Endothelial cell of umbilical vein (primary cell): ENCODE measurements at regions of chr1 and their contacts with region 1.

Region 1: DNA sequence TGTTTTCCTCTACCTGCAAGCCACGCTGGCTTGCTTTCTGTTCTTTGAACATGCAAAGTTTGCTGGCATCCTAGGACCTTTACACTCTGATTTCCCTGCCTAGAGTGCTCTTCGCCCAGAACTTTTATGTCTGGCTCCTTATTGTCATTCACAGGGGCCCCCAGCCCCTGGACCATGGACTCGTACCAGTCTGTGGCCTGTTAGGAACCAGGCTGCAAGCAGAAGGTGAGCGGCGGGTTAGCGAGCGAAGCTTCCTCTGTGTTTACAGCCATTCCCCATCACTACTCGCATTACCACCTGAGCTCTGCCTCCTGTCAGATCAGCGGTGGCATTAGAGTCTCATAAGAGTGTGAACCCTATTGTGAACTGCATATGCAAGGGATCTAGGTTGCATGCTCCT is 73.0 kb downstream of the ATG4C start:
- DNase-seq: no peak
- H3K4me3 ChIP-seq: no peak overlapping the region
- H3K27ac ChIP-seq: no peak overlapping the region
- H3K4me1 ChIP-seq: no peaks in the 10 kb centered on the region
- H3K27me3 ChIP-seq: no peaks in the 10 kb centered on the region
- CTCF ChIP-seq: no peak
- POLR2A ChIP-seq: no peak

Region 2: DNA sequence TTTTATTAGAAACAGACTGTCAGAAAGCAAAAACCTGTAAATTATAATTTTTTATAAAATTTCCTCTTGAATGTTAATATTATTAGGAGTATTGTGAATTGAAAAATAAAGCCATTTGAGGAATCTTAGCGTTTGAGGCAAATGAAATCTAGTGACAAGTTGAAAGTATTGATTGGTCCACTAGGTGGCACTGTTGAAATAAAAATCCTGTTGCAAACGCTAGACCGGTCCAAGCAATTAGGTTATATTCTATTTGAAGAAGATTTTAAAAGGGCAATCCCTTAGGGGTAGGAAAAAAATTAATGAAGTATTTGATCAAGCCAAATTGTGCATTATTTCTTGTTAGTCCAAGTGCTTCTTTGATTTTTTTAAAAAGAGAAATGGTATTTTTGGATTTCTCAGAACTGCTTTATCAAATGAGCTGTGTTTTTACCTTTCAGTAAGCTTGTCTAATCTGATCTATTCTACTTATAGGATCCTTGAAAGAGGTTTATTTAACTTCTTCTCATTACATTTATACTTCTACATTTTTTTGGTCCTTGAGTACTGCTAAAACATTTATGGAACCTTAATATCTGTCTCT is 15.3 kb before region 1 on chr1:
- CTCF ChIA-PET with region 1: interaction called, 53 read pairs
- POLR2A ChIA-PET with region 1: no interaction called
- dilution Hi-C with region 1: no loop called
- intact Hi-C with region 1: no loop called
- DNase-seq: peak; percentile 70
- H3K4me3 ChIP-seq: no peak overlapping the region
- H3K27ac ChIP-seq: no peak overlapping the region
- H3K4me1 ChIP-seq: no peaks in the 10 kb centered on the region
- H3K27me3 ChIP-seq: no peaks in the 10 kb centered on the region
- CTCF ChIP-seq: peak; percentile 35 to 37
- POLR2A ChIP-seq: no peak

Region 3: GRCh38 chr1:62882201-62883104 is 25.5 kb after region 1 on chr1:
- CTCF ChIA-PET with region 1: no interaction called
- POLR2A ChIA-PET with region 1: no interaction called
- dilution Hi-C with region 1: no loop called
- intact Hi-C with region 1: no loop called
- DNase-seq: no peak
- H3K4me3 ChIP-seq: no peak overlapping the region
- H3K27ac ChIP-seq: no peak overlapping the region
- H3K4me1 ChIP-seq: no peaks in the 10 kb centered on the region
- H3K27me3 ChIP-seq: peaks cover 4 to 20% of the 10 kb centered on the region in 2 experiments
- CTCF ChIP-seq: no peak
- POLR2A ChIP-seq: no peak

Region 4: DNA sequence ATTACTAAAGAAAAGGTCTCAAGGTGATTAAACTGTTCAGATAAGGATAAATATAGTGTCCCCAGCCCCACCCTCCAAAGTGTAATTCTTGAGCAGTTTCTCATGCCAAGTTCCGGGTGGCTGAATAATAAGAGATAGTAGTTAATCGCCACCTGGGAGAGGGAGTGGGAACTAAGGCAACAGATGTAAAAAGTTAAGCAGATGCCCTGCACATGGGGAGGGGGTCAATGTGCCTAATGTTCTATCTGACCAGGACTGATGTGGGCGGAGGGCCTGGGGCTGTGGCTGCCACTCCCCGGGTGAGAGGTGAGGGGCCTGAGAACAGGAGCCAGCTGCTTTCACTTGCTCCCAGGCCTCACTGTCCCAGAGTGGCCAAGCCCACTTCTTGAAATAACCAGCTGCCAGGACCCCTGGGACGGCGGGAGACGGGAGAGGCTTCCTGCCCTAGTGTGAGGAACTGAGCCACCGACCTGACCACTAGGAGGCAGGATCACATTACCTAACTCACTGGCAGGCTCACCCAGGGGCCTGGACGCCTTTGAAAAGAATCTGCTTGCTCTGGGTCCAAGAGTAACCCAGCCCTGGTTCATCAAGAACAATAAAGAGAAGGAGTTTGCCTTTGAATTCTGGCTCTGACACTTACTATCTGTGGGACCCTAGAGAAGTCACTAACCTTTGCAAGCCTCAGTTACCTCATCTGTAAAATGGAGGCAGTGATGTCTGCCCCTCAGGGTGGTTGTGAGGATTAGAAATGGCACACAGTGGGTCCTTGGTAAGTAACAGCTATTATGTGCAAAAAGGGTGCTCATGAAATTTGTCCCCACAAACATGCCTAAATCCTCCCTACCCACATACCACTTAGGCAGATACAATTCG is 106.2 kb after region 1 on chr1:
- CTCF ChIA-PET with region 1: no interaction called
- POLR2A ChIA-PET with region 1: no interaction called
- dilution Hi-C with region 1: no loop called
- intact Hi-C with region 1: no loop called
- DNase-seq: peak; percentile 29
- H3K4me3 ChIP-seq: no peak overlapping the region
- H3K27ac ChIP-seq: no peak overlapping the region
- H3K4me1 ChIP-seq: no peaks in the 10 kb centered on the region
- H3K27me3 ChIP-seq: no peaks in the 10 kb centered on the region
- CTCF ChIP-seq: peak; percentile 51 to 67
- POLR2A ChIP-seq: no peak